ENCODE measurements at regions of chr13 and their contacts with region 1.

Region 1: GRCh38 chr13:112873851-112874750 is 94.9 kb upstream of the MCF2L start:
- DNase-seq: peak; percentile 79 to 85
- ATAC-seq: peak; percentile 66 to 92 (median 87)
- H3K4me3 ChIP-seq: peak overlapping the region in 3 of 10 donors; percentile 12 to 30 (median 22)
- H3K27ac ChIP-seq: peak overlapping the region in 8 of 10 donors; percentile 18 to 75 (median 50)
- H3K4me1 ChIP-seq: peaks cover 0 to 18% (median 10%) of the 10 kb centered on the region in 9 donors
- H3K27me3 ChIP-seq: no peaks in the 10 kb centered on the region
- CTCF ChIP-seq: peak; percentile 91 to 97 (median 95)

Region 2: GRCh38 chr13:112616586-112617362 is 257.3 kb before region 1 on chr13:
- intact Hi-C with region 1: loop called in 1 of 10 experiments (anchors 2 kb)
- DNase-seq: peak in 1 of 2 donors; percentile 22
- ATAC-seq: peak in 7 of 8 donors; percentile 32 to 69 (median 55)
- H3K4me3 ChIP-seq: no peak overlapping the region
- H3K27ac ChIP-seq: no peak overlapping the region
- H3K4me1 ChIP-seq: peaks cover 0 to 7% (median 0%) of the 10 kb centered on the region in 9 donors
- H3K27me3 ChIP-seq: peaks cover 0 to 12% (median 0%) of the 10 kb centered on the region in 7 donors
- CTCF ChIP-seq: peak; percentile 18 to 72 (median 63)

Region 3: DNA sequence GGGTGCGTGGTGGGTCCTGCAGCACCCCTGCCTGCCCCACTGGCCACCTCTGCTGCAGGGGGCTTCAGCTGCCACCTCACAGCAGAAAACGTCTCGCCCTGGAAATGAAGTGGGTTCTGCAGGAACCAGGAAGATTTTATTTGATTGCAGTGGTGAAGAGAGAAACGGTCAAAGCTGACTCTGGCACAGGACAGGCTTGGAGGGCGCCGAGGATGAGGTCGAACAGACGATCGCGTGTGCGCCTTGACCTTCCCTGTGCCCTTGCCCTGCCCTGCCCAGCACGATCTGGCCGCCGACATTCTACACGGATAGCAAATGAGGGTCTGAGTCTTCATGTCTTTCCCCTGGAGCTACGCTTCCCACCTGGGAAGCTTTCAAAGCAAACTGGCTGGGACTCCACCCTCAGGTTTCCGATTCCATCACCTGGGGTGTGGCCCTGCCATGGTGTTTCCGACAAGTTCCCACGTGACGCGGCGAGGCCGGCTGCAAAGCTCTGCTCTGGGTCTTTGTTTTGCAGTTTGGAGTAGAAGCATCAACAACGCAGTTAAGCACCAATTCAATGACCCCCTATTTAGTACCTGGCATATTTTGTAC is 235.8 kb before region 1 on chr13:
- intact Hi-C with region 1: loop called in 9 of 10 experiments (anchors 2 to 10 kb)
- DNase-seq: no peak
- ATAC-seq: no peak
- H3K4me3 ChIP-seq: no peak overlapping the region
- H3K27ac ChIP-seq: no peak overlapping the region
- H3K4me1 ChIP-seq: peaks cover 0 to 16% (median 0%) of the 10 kb centered on the region in 9 donors
- H3K27me3 ChIP-seq: peaks cover 0 to 58% (median 49%) of the 10 kb centered on the region in 7 donors
- CTCF ChIP-seq: no peak

Region 4: DNA sequence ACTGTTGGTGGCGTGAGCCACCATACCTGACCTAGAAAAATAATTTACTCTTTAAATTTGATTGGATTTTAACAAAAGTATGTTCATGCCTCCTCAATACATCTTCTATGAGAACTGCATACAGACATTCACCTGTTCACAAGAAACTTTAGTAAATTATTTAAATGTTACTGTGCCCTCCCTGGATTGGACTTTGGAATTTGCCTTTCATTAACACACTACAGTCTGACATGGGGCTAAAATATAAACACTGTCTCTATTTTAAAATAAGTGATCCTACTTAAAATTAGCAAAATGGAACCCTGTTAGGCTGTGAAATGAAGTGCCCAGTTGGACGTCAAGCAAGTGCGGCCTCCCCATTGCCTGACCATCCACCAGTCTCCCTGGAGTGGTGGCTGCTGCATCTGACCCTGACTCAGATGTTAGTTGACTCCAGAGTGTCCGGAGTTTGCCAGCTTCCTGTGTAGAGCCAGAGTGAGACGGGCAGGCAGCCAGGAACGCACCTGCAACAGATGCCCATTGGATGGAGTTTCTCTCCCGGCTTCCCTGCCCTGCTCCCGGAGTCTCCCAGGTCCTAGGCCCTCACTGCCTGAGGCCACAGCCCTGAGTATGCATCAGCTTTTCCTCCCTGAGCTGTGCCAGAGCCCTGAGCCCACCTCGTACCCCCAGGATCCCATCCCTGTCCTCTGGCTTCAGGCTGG is 230.2 kb before region 1 on chr13:
- intact Hi-C with region 1: loop called in 9 of 10 experiments (anchors 2 to 10 kb)
- DNase-seq: no peak
- ATAC-seq: no peak
- H3K4me3 ChIP-seq: no peak overlapping the region
- H3K27ac ChIP-seq: no peak overlapping the region
- H3K4me1 ChIP-seq: peaks cover 0 to 16% (median 0%) of the 10 kb centered on the region in 9 donors
- H3K27me3 ChIP-seq: peaks cover 0 to 18% (median 12%) of the 10 kb centered on the region in 7 donors
- CTCF ChIP-seq: no peak

Measured in heart right ventricle (tissue), 16 donors.